GM12878 (cell line): ENCODE measurements at regions of chr10 and their contacts with region 1.

Region 1: GRCh38 chr10:34607894-34608293 is 207.2 kb downstream of the PARD3 start:
- DNase-seq: no peak
- ATAC-seq: no peak
- H3K4me3 ChIP-seq: no peak overlapping the region
- H3K27ac ChIP-seq: no peak overlapping the region
- H3K4me1 ChIP-seq: no peaks in the 10 kb centered on the region
- H3K27me3 ChIP-seq: no peaks in the 10 kb centered on the region
- CTCF ChIP-seq: no peak
- EP300 ChIP-seq: no peak
- POLR2A ChIP-seq: no peak
- RAD21 ChIP-seq: no peak

Region 2: DNA sequence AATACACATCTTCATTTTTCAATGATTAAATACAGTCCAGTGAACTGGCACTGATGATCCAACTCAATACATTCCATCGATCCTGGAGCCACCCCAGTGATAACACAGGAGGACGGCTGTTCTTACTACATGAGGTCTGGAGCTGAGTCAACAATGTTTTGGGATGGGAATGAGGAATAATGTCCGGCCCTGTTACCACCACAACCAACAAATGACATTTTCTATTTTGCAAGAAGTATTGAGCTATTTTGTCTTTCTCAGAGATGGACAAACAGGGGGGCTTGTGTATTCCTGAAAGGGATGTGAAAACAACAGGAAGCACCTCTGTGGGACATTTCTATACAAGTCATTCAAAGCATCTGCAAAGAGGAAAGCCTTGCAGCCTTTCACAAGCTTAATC is 42.0 kb before region 1 on chr10:
- CTCF ChIA-PET with region 1: no interaction called
- POLR2A ChIA-PET with region 1: interaction called, 13 read pairs
- RAD21 ChIA-PET with region 1: interaction called, 3 read pairs
- SMC1A ChIA-PET with region 1: interaction called, 3 read pairs
- in situ Hi-C with region 1: no loop called
- intact Hi-C with region 1: no loop called
- DNase-seq: no peak
- ATAC-seq: no peak
- H3K4me3 ChIP-seq: no peak overlapping the region
- H3K27ac ChIP-seq: no peak overlapping the region
- H3K4me1 ChIP-seq: no peaks in the 10 kb centered on the region
- H3K27me3 ChIP-seq: no peaks in the 10 kb centered on the region
- CTCF ChIP-seq: no peak
- EP300 ChIP-seq: no peak
- POLR2A ChIP-seq: no peak
- RAD21 ChIP-seq: no peak

Region 3: GRCh38 chr10:34593930-34594329 is 14.0 kb before region 1 on chr10:
- CTCF ChIA-PET with region 1: interaction called, 5 read pairs
- POLR2A ChIA-PET with region 1: interaction called, 3 read pairs
- RAD21 ChIA-PET with region 1: interaction called, 6 read pairs
- SMC1A ChIA-PET with region 1: interaction called, 17 read pairs
- in situ Hi-C with region 1: no loop called
- intact Hi-C with region 1: no loop called
- DNase-seq: no peak
- ATAC-seq: no peak
- H3K4me3 ChIP-seq: no peak overlapping the region
- H3K27ac ChIP-seq: no peak overlapping the region
- H3K4me1 ChIP-seq: no peaks in the 10 kb centered on the region
- H3K27me3 ChIP-seq: no peaks in the 10 kb centered on the region
- CTCF ChIP-seq: no peak
- EP300 ChIP-seq: no peak
- POLR2A ChIP-seq: no peak
- RAD21 ChIP-seq: no peak